AG04449 (cell line): ENCODE measurements at regions of chr16 and their contacts with region 1.

Region 1: DNA sequence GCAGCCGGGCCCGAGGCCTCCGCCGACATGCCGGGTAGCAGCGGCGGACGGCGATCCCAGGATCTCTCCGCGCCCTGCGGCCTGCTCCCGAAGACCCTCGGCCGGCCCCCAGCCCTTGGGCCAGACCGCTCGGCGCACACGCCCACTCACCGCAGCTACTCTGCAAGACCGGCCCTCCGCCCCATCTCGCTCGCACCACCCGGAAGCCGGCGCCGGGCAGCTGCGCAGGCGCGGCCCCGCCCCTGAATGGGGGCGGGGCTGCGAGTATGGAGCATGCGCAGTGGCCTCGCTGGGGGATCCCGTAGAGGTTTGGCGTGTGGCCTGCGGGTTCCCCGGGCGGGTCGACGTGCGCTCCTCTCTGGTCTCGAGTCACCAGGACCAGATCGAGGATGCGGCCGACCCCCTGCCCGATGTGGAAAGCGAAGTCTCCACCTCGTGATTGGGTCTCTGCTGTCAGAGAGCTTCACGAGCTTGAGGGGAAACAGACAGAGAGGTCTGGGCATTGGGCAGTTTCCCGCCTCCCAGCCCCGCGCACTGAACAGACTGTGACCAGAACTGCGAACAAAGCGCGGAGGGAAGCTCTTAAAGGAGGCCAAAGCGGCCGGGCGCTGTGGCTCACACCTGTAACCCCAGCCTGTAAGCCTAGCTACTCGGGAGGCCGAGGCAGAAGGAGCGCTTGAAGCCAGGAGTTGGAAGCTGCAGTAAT is at the start of gene KCTD13:
- DNase-seq: no peak
- H3K4me3 ChIP-seq: peak within 1 kb of the TSS; percentile 95
- CTCF ChIP-seq: no peak

Region 2: GRCh38 chr16:29900102-29900887 is 25.9 kb before region 1 on chr16 and contains the start of gene ASPHD1:
- CTCF ChIA-PET with region 1: no interaction called
- POLR2A ChIA-PET with region 1: interaction called, 15 read pairs
- DNase-seq: peak; percentile 16
- H3K4me3 ChIP-seq: peak within 1 kb of the TSS; percentile 70
- CTCF ChIP-seq: no peak

Region 3: DNA sequence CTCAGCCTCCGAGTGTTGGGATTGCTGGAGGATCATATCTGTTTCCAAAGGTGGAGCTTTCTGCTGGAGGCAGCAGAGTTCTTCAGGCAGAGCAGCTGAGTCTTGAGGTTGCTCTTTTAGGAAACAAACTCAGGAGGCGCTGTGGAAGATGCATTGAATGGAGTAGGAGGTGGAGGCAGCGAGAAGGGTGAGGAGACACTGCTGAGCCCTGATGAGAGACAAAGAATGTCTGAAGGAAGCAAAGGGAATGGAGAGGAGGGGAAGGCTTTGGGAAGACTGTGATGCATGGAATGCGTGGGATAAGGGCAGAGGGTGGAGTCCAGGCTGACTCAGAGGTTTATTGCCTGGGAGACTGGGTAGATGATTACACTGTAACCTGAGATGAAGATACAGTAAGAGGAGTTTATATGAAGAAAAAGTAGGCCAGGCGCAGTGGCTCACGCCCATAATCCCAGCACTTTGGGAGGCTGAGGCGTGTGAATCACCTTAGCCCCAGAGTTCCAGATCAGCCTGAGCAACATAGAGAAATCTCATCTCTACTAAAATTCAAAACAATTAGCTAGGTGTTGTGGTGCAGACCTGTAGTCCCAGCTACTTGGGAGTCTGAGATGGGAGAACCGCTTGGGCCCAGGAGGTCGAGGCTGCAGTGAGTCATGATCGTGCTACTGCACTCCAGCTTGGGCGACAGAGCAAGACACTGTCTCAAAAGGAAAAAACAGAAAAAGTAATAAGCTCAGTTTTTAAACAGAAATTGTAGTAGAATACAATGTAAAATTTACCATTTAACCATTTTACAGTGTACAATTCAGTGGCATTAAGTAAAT is 17.9 kb after region 1 on chr16:
- CTCF ChIA-PET with region 1: interaction called, 13 read pairs
- POLR2A ChIA-PET with region 1: interaction called, 9 read pairs
- DNase-seq: peak; percentile 95
- H3K4me3 ChIP-seq: peak overlapping the region; percentile 24
- CTCF ChIP-seq: peak; percentile 41

Region 4: DNA sequence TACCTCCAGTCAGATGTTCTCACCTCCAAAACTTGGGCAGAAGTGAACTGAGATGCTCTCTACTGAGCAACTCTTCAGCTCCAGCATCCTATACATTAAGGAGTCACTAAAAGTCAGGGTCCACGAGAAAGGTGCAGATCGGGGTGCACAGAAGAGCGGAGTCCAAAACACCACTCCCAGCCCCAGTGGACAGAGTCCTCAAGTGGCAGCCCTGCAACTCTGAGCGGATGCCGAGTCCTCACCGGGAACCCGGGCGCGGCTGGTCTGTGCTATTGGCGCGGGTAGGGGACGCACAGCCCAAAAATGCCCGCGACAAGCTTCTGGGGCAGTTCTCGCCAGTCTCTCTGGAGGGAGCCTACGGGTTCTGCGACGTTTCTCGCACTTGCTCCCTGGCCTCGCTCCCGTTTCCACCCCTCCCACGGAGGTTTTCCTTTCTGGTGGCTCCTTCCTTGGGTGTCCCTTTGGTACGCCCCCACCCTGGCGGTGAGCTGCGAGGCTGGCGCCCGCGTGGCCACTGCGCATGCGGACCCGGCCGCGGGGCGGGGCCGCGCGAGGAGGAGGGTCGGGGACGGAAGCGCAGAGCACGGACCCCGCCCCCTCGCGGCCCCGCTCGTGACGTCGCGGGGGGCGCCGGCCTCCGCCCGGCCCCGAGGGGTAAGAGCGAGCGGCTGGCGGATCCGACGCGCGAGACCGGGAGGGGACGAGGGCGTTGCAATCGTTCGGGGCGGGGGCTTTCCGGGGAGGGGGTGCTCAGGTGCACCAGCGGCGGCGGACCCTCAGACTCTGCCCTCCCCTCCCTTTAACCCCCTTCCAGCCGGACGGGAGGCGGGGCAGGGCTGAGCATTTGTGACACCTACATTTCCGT is 35.6 kb after region 1 on chr16 and contains the start of gene TMEM219:
- CTCF ChIA-PET with region 1: interaction called, 4 read pairs
- POLR2A ChIA-PET with region 1: interaction called, 11 read pairs
- DNase-seq: no peak
- H3K4me3 ChIP-seq: peak within 1 kb of the TSS; percentile 79
- CTCF ChIP-seq: peak; percentile 26